ENCODE measurements at regions of chr9 and their contacts with region 1.

Region 1: DNA sequence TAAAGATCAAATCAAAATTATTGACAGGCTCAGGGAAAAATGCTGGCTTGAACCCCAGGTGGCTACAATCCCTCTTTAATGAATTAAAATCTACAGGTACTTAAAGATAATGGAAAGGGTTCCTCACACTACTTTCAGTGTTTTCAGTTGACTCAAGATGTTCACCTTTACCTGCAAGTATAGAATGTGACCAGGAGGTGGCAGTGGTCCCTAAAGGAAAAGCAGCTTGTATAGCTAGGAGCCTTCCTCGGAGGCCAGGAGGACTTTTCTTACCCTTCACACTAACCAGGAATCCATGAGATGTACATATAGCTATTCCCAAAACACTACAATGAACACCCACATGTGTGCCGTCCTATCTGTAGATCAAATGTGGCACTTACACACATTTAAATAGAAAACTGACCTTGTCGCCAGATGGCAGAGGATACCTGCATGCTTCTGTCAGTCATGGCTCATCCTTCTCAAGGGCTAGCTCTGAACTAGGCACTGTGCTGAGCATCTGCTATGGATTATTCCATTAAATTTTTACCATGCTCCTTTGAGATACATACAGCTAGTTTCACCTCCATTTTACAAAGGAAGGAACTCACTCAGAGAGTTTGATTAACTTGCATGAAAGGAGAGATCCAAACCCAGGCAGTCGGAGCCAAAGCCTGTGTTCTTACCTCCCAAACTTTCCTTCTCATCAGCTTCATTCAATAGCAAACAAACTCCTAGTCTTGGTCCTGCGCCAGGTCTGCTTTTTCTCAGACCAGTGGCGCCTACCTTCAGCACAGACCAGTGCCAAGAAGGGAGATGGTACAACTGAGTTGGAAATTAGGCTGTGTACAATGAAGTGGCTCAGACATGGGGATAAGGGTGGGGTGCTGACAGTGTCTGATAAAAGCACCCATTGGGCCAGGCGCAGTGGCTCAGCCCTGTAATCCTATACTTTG is 24.5 kb downstream of the C9orf152 start:
- DNase-seq: peak in 1 of 2 donors; percentile 51
- H3K4me3 ChIP-seq: no peak overlapping the region
- H3K27ac ChIP-seq: no peak overlapping the region
- H3K4me1 ChIP-seq: peaks cover 0 to 7% (median 1%) of the 10 kb centered on the region in 4 donors
- H3K27me3 ChIP-seq: no peaks in the 10 kb centered on the region
- CTCF ChIP-seq: peak; percentile 71 to 75

Region 2: GRCh38 chr9:110007477-110008270 is 175.8 kb before region 1 on chr9:
- intact Hi-C with region 1: no loop called
- DNase-seq: no peak
- H3K4me3 ChIP-seq: no peak overlapping the region
- H3K27ac ChIP-seq: no peak overlapping the region
- H3K4me1 ChIP-seq: no peaks in the 10 kb centered on the region
- H3K27me3 ChIP-seq: no peaks in the 10 kb centered on the region
- CTCF ChIP-seq: no peak

Region 3: DNA sequence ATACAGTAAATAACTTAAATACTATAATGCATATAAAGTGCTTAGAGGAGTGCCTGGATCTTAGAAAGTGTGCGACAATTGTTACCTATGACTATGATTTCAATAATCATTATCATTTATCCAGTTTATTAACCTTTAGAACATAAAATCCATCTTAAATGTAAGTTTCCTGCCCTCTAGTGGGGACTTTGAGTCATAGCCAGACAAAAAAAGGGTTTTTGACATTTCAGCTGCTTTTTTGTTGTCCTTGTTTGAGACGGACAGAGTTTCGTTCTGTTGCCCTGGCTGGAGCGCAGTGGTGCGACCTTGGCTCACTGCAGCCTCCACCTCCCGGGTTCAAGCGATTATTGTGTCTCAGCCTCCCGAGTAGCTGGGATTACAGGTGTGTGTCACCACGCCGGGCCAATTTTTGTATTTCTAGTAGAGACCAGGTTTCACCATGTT is 34.2 kb after region 1 on chr9:
- intact Hi-C with region 1: loop called (anchors 5 kb)
- DNase-seq: no peak
- H3K4me3 ChIP-seq: no peak overlapping the region
- H3K27ac ChIP-seq: no peak overlapping the region
- H3K4me1 ChIP-seq: no peaks in the 10 kb centered on the region
- H3K27me3 ChIP-seq: no peaks in the 10 kb centered on the region
- CTCF ChIP-seq: peak; percentile 71 to 76

Region 4: DNA sequence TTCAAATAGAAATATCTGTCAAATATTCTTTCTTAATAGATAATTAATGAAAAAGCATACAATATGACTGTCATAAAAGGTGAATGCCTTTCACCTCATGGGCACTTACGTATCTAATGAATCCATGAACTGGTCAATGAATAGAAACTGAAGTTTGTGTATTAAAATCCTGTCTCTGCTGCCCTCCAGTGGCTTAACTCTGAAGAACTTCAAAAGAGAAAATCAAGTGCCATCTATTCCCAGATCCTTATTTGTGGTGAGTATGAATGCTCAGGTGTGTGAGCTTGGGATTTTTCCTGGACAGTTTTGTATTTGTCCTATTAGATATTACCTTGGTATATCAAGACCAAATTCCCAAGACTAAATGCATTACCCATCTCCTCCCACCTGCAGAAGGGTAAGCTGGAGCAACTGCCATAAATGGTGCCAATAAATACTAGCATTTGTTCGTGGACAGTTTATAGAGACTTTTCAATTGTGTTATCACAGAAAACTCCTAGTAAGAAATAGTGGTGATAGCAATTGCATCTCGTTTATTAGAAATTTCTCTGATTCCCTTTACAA is 440.1 kb after region 1 on chr9:
- intact Hi-C with region 1: loop called (anchors 10 kb)
- DNase-seq: peak in 1 of 2 donors; percentile 36
- H3K4me3 ChIP-seq: no peak overlapping the region
- H3K27ac ChIP-seq: no peak overlapping the region
- H3K4me1 ChIP-seq: peaks cover 0 to 8% (median 0%) of the 10 kb centered on the region in 4 donors
- H3K27me3 ChIP-seq: no peaks in the 10 kb centered on the region
- CTCF ChIP-seq: peak; percentile 79 to 85

Measured in tibial artery (tissue), 4 donors.